ENCODE measurements at regions of chr12 and their contacts with region 1.

Region 1: GRCh38 chr12:53213348-53213747 is 6.3 kb upstream of the ITGB7 start:
- DNase-seq: peak; percentile 66 to 74
- ATAC-seq: peak; percentile 75 to 86
- H3K4me3 ChIP-seq: no peak overlapping the region
- H3K27ac ChIP-seq: no peak overlapping the region
- H3K4me1 ChIP-seq: peaks cover 32 to 45% of the 10 kb centered on the region in 2 donors
- H3K27me3 ChIP-seq: no peaks in the 10 kb centered on the region
- CTCF ChIP-seq: peak; percentile 94 to 97 (median 97)
- POLR2A ChIP-seq: no peak

Region 2: GRCh38 chr12:53171725-53172329 is 41.5 kb before region 1 on chr12:
- in situ Hi-C with region 1: no loop called
- intact Hi-C with region 1: no loop called
- DNase-seq: no peak
- ATAC-seq: no peak
- H3K4me3 ChIP-seq: no peak overlapping the region
- H3K27ac ChIP-seq: no peak overlapping the region
- H3K4me1 ChIP-seq: no peaks in the 10 kb centered on the region
- H3K27me3 ChIP-seq: no peaks in the 10 kb centered on the region
- CTCF ChIP-seq: no peak
- POLR2A ChIP-seq: no peak

Region 3: DNA sequence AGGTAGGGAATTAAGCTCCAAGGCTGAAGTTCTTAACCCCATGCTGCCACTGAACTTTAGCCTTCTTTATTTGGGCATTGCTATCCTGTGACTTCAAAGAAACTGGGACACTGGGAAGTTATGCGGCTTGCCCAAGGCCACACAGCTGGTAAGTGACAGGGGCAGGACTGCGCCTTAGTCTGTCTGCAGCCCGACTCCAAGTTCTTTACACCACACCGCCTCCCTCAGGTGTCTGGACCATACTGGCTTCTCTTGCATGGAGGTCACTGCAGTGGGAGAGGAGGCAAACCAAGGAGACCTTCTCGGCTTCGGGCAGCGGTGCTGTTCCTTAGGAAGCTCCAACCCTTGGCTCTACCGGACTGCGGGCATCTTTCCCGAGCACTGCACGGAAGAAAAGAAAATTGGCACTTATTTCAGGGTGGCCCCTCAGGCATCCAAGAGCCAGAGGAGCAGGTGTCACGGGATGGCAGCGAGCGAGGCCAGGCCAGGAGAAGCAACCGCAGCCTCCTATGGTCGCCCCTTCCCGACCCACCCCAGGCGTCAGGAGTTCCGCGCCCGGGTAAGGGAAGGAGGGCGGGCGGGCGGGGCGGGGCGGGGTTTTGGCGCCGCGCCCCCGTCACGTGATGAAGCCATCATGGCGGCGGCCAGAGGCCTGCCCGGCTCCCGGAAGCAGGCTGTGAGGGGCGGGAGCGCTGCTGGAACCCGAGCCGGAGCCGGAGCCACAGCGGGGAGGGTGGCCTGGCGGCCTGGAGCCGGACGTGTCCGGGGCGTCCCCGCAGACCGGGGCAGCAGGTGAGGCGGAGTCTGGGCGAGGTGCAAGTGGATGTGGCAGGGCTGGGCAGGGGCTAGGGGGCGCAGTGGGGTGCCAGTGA is 38.4 kb after region 1 on chr12:
- in situ Hi-C with region 1: no loop called
- intact Hi-C with region 1: loop called (anchors 1 kb)
- DNase-seq: peak; percentile 73 to 81
- ATAC-seq: peak; percentile 91 to 96
- H3K4me3 ChIP-seq: peak overlapping the region; percentile 67 to 85 (median 71)
- H3K27ac ChIP-seq: peak overlapping the region; percentile 92 to 97 (median 94)
- H3K4me1 ChIP-seq: peaks cover 16 to 17% of the 10 kb centered on the region in 2 donors
- H3K27me3 ChIP-seq: no peaks in the 10 kb centered on the region
- CTCF ChIP-seq: peak; percentile 20 to 46 (median 33)
- POLR2A ChIP-seq: peak; percentile 36 to 47

Region 4: DNA sequence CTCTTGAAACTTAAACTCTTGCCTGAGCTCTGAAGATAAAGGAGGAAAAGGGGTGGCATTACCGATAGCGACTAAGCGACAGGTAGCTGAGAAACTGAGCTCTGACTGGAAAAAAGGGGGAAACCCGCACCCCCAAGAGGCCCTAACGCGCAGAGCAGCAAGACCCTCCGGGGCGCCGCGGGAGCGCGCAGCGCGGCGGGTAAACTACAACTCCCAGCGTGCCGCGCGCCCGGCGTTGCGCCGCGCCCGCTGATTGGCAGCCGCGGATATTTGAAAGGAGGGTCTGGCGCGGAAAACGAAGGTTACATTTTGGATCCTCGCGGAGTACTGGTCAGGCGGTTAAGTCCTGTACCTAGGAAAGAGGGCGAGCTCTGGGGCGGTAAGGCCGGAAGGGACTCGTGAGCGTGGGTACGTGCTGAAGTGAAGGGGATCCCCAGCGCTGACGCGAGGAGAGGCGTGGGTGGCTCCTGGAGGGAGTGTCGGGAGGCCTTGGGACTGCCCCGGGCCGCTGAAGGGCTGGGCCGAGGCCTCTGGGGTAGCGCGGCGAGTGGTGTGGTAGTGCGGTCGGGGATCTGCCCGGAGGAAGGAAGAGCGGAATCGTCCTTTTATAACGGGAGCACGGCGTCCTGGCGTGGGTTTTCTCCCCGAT is 54.8 kb after region 1 on chr12 and contains the start of gene ESPL1:
- in situ Hi-C with region 1: no loop called
- intact Hi-C with region 1: loop called (anchors 1 kb)
- DNase-seq: peak; percentile 16 to 47
- ATAC-seq: peak; percentile 84 to 88
- H3K4me3 ChIP-seq: peak within 1 kb of the TSS; percentile 64 to 77 (median 72)
- H3K27ac ChIP-seq: peak within 1 kb of the TSS in 3 of 4 donors; percentile 61 to 68 (median 64)
- H3K4me1 ChIP-seq: peaks cover 6 to 7% of the 10 kb centered on the region in 2 donors
- H3K27me3 ChIP-seq: no peaks in the 10 kb centered on the region
- CTCF ChIP-seq: peak in 3 of 5 experiments; percentile 21 to 41 (median 36)
- POLR2A ChIP-seq: no peak
- total RNA-seq, gene ESPL1: 0.20 to 0.44 (median 0.24) TPM in 3 of 4 donors, not detected in the other

Region 5: DNA sequence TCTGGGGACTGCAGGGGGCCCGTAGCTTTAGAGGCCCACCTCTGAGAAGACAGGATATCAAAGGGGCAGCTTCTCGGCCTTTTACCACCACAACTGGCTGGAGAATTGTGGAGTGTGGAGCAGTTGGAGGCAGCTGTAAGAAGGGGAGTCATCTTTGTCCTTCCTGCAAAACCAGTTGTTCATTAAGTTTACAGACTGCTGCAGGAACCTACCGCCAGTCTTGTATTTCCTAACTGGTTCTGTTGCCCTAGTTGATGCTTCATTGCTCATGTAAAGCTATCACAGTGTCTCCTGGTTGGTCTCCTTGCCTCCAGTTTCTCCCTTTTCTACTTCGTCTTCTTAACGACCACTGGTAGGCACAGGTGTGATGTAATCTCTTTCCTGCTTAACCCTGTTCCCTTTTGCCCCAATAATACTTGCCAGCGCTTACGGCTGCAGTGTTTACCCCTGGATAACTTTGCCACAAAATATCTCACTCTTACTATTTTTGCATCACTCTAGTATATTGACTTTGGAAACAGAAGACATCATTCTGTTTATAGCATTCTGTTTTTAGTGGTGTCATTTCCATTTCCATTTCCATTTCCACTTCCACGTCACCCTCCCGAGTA is 66.6 kb after region 1 on chr12:
- in situ Hi-C with region 1: loop called in 3 of 4 experiments (anchors 5 to 10 kb)
- intact Hi-C with region 1: no loop called
- DNase-seq: no peak
- ATAC-seq: no peak
- H3K4me3 ChIP-seq: no peak overlapping the region
- H3K27ac ChIP-seq: no peak overlapping the region
- H3K4me1 ChIP-seq: no peaks in the 10 kb centered on the region
- H3K27me3 ChIP-seq: no peaks in the 10 kb centered on the region
- CTCF ChIP-seq: no peak
- POLR2A ChIP-seq: no peak

Region 6: DNA sequence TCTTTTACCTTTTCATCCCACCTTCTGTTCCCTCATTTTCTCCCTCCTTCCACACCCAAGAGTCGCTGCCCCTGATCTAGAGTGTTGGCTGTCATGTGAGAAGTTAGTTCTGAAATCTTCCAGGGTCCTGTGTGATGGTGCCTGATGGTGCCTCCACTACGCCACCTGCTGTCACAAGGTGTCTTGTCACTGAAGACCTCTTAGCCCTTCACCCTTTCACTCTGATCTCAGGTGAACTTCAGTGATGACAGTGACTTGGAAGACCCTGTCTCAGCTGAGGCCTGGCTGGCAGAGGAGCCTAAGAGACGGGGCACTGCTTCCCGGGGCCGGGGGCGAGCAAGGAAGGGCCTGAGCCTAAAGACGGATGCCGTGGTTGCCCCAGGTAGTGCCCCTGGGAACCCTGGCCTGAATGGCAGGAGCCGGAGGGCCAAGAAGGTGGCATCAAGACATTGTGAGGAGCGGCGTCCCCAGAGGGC is 74.4 kb after region 1 on chr12:
- in situ Hi-C with region 1: loop called in 3 of 4 experiments (anchors 5 to 10 kb)
- intact Hi-C with region 1: loop called (anchors 1 kb)
- DNase-seq: peak; percentile 26 to 50
- ATAC-seq: peak; percentile 81 to 93
- H3K4me3 ChIP-seq: no peak overlapping the region
- H3K27ac ChIP-seq: no peak overlapping the region
- H3K4me1 ChIP-seq: no peaks in the 10 kb centered on the region
- H3K27me3 ChIP-seq: no peaks in the 10 kb centered on the region
- CTCF ChIP-seq: peak; percentile 40 to 73 (median 68)
- POLR2A ChIP-seq: no peak

Region 7: GRCh38 chr12:53295070-53295890 is 81.9 kb after region 1 on chr12 and contains the start of gene PFDN5:
- in situ Hi-C with region 1: no loop called
- intact Hi-C with region 1: loop called (anchors 2 kb)
- DNase-seq: peak; percentile 83 to 87
- ATAC-seq: peak; percentile 90 to 93
- H3K4me3 ChIP-seq: peak within 1 kb of the TSS; percentile 77 to 97 (median 89)
- H3K27ac ChIP-seq: peak within 1 kb of the TSS; percentile 83 to 90 (median 88)
- H3K4me1 ChIP-seq: peaks cover 28% of the 10 kb centered on the region in 2 donors
- H3K27me3 ChIP-seq: no peaks in the 10 kb centered on the region
- CTCF ChIP-seq: peak in 2 of 5 experiments; percentile 32 to 44
- POLR2A ChIP-seq: peak; percentile 56 to 62
- total RNA-seq, gene PFDN5: 341 to 464 (median 358) TPM

Region 8: DNA sequence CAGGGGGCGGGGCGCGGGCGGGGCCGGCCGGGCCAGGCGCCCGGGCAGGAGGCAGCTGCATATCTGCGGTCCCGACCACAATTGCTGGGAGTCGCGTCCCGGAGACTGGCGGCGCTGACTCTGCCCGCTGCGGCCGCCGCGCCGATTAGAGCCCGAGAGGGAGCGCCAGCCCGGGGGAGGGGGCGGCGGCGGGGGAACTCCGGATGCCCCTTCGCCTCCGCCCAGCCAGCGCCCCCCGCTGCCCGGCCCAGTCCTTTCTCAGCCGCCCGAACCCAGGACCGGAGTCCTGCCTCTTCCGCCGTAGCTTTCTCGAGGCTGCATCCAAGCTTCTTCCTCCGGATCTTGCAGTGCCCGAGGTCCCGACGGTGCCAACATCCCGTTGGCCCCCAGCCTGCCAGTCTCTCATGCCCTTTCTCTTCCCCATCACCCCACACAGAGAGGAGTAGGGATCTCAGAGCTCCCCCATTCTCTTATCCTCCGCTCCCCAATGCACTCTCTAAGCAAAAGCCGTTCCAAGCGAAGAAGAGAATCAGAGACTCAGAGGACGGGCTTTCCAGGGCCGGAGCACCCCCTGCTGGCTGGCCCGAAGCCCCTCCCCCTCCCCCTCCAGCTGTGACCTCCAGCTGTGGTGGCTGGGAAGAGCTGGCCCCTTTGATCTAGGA is 131.6 kb after region 1 on chr12:
- in situ Hi-C with region 1: loop called in 1 of 4 experiments (anchors 10 kb)
- intact Hi-C with region 1: loop called (anchors 2 kb)
- DNase-seq: peak; percentile 57 to 63
- ATAC-seq: peak; percentile 94 to 96
- H3K4me3 ChIP-seq: peak overlapping the region; percentile 66 to 90 (median 74)
- H3K27ac ChIP-seq: peak overlapping the region; percentile 60 to 76 (median 72)
- H3K4me1 ChIP-seq: peaks cover 6 to 13% of the 10 kb centered on the region in 2 donors
- H3K27me3 ChIP-seq: no peaks in the 10 kb centered on the region
- CTCF ChIP-seq: peak; percentile 76 to 80 (median 76)
- POLR2A ChIP-seq: peak; percentile 39 to 50

Region 9: DNA sequence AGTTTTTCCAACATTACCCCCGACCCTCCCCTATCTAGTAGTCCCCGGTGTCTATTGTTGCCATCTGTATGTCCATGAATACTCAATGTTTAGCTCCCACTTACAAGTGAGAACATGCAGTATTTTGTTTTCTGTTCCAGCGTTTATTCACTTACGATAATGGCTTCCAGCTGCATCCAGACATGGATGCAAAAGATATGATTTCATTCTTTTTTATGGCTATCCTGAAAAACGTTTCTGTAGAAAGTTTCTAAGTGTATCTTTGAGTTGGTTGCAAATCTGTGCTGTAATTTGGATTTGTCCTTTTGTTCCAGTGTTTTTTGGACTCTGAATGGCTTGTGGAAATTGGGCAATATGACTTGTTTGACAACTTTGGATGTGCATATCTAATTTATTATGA is 178.4 kb after region 1 on chr12:
- in situ Hi-C with region 1: no loop called
- intact Hi-C with region 1: no loop called
- DNase-seq: no peak
- ATAC-seq: no peak
- H3K4me3 ChIP-seq: no peak overlapping the region
- H3K27ac ChIP-seq: peak overlapping the region; percentile 61 to 76 (median 72)
- H3K4me1 ChIP-seq: peaks cover 46 to 52% of the 10 kb centered on the region in 2 donors
- H3K27me3 ChIP-seq: no peaks in the 10 kb centered on the region
- CTCF ChIP-seq: no peak
- POLR2A ChIP-seq: no peak

Measured in gastrocnemius medialis (tissue), 4 donors.